ENCODE measurements at regions of chr2 and their contacts with region 1.

Region 1: GRCh38 chr2:188524519-188525113 is 232.9 kb downstream of the GULP1 start:
- DNase-seq: peak; percentile 67
- H3K4me3 Mint-ChIP-seq: no peak overlapping the region
- H3K27ac Mint-ChIP-seq: no peak overlapping the region
- H3K4me1 Mint-ChIP-seq: peaks cover 7% of the 10 kb centered on the region
- H3K27me3 Mint-ChIP-seq: no peaks in the 10 kb centered on the region
- CTCF ChIP-seq: peak; percentile 73

Region 2: GRCh38 chr2:188713961-188714360 is 189.3 kb after region 1 on chr2:
- CTCF ChIA-PET with region 1: no interaction called
- POLR2A ChIA-PET with region 1: no interaction called
- intact Hi-C with region 1: no loop called
- DNase-seq: no peak
- H3K4me3 Mint-ChIP-seq: no peak overlapping the region
- H3K27ac Mint-ChIP-seq: no peak overlapping the region
- H3K4me1 Mint-ChIP-seq: no peaks in the 10 kb centered on the region
- H3K27me3 Mint-ChIP-seq: no peaks in the 10 kb centered on the region
- CTCF ChIP-seq: no peak

Region 3: DNA sequence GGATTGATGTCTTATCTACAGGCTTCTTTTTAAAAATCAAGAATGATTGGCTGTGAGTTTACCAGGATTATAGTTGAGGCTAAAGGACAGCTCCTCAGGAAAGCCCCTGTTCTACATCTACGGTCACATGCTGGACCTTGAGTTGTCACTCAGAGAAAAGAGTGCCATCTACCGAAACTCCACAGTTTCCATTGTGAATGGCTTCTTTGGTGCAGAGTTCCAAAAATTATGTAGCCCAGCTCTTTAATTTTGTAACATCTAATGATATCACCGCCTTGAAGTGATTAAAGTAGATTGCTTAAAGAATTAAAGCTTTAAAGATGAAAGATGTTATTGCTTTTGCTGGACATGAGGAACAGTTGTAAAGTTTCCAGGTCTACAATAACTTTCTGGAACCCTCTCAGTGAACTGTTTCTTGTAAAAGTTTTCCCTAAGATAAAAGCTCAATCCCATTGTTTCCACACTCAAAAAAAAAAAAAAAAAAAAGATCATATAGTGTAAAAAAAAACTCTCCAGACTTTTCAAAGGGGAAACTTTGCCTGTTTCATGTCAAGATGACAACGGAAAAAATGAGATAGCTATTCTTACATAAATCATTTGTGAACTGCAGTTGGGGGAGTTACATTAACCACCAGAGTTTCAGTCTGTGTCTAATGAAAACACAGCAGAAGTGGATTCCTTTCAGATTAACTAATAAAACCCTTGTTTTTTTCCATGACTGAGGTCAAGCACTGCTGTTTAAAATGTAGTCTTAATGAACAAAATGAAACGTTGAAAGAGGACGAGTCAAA is 453.9 kb after region 1 on chr2:
- CTCF ChIA-PET with region 1: interaction called, 176 read pairs
- POLR2A ChIA-PET with region 1: interaction called, 10 read pairs
- intact Hi-C with region 1: no loop called
- DNase-seq: no peak
- H3K4me3 Mint-ChIP-seq: no peak overlapping the region
- H3K27ac Mint-ChIP-seq: no peak overlapping the region
- H3K4me1 Mint-ChIP-seq: no peaks in the 10 kb centered on the region
- H3K27me3 Mint-ChIP-seq: no peaks in the 10 kb centered on the region
- CTCF ChIP-seq: no peak

Region 4: GRCh38 chr2:188983427-188984064 is 458.9 kb after region 1 on chr2:
- CTCF ChIA-PET with region 1: interaction called, 176 read pairs
- POLR2A ChIA-PET with region 1: interaction called, 10 read pairs
- intact Hi-C with region 1: loop called (anchors 1 kb)
- DNase-seq: peak; percentile 52
- H3K4me3 Mint-ChIP-seq: no peak overlapping the region
- H3K27ac Mint-ChIP-seq: no peak overlapping the region
- H3K4me1 Mint-ChIP-seq: no peaks in the 10 kb centered on the region
- H3K27me3 Mint-ChIP-seq: no peaks in the 10 kb centered on the region
- CTCF ChIP-seq: peak; percentile 43

Region 5: GRCh38 chr2:189347540-189347939 is 822.9 kb after region 1 on chr2:
- CTCF ChIA-PET with region 1: no interaction called
- POLR2A ChIA-PET with region 1: no interaction called
- intact Hi-C with region 1: loop called (anchors 10 kb)
- DNase-seq: peak; percentile 85
- H3K4me3 Mint-ChIP-seq: no peak overlapping the region
- H3K27ac Mint-ChIP-seq: peak overlapping the region; percentile 55
- H3K4me1 Mint-ChIP-seq: peaks cover 17% of the 10 kb centered on the region
- H3K27me3 Mint-ChIP-seq: no peaks in the 10 kb centered on the region
- CTCF ChIP-seq: no peak